Astrocyte of the cerebellum (primary cell): ENCODE measurements at regions of chr15 and their contacts with region 1.

Region 1: DNA sequence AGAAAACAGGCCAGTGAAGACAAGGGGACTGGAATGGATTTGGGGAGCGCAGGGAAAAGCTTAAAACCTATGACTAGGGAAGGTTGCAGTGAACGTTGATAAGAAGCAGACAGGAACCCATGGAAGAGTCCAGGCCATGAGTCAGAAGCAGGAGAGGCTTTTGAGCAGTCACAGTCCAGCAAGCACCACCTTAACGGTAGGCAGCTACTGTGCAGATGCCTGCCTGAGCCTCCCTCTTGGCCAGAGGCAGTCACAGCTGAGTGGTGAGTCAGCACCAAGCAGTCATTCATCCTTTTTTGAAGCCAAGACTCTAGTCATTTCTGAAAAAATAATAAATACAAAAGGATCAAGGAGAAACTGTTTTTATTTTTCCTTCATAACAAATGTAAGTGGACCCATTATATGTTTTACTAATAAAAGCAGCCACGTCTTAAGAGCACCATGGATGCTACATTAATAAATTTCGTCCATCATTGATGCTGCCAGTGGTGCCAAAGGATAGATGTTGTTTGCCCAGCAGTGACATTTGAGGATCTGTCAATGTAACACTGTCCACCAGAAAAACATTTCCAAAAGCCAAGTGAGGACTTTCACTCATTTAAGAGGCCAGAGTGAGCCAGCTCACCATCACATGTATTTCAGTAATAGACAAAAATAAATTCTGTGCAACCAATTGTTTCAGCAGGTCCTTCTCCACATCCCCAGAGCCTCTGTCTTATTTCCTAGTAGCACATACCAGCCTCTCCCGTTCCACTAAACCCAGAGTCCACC is 42.1 kb upstream of the ACTC1 start:
- DNase-seq: peak; percentile 23
- H3K4me3 ChIP-seq: no peak overlapping the region
- CTCF ChIP-seq: no peak

Region 2: GRCh38 chr15:34865531-34865930 is 28.1 kb after region 1 on chr15:
- in situ Hi-C with region 1: no loop called
- DNase-seq: no peak
- H3K4me3 ChIP-seq: no peak overlapping the region
- CTCF ChIP-seq: no peak

Region 3: DNA sequence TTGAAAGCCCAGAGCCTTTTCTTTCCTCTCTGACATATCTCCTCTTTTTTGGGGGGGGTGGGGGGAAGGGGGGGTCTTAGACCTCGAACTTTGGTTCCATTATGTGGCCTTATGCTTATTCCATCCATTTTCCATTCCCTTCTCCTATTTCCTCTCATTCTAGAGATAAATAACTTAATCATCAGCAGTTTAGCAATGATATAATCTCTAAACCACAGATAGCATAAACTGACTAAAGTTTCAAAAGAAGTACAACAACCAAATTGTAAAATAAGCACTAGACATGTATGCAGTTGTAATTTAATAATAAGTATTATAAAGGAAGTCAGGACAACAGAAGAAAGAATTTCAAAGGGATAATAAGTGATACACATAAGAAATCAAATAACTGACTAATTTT is 67.6 kb after region 1 on chr15:
- in situ Hi-C with region 1: loop called (anchors 5 kb)
- DNase-seq: no peak
- H3K4me3 ChIP-seq: no peak overlapping the region
- CTCF ChIP-seq: no peak

Region 4: DNA sequence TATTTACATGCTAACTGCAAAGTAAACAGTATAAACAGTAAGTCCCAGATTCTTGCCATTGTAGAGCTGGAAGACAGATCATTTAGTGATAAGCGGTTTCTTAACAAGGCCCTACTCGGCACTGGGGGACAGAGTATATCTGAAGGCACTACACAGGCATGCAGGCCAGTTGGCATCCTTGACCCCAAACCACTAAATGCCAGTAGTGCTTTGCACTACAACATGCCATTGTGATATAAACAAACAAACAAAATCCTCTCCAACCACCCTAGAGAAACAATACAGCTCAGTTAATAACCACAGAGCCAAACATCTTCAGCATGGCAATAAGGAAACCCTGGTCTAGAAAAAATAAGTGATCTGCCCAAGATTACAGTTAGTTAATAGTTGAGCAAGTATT is 126.8 kb after region 1 on chr15:
- in situ Hi-C with region 1: no loop called
- DNase-seq: no peak
- H3K4me3 ChIP-seq: no peak overlapping the region
- CTCF ChIP-seq: no peak